ENCODE measurements at regions of chr1 and their contacts with region 1.

Region 1: GRCh38 chr1:67618285-67619018 is 66.5 kb upstream of the GADD45A start:
- DNase-seq: peak; percentile 44 to 90
- H3K4me3 ChIP-seq: peak overlapping the region; percentile 10 to 45
- H3K27ac ChIP-seq: peak overlapping the region; percentile 80 to 82
- H3K4me1 ChIP-seq: peaks cover 2 to 14% of the 10 kb centered on the region in 2 donors
- H3K27me3 ChIP-seq: no peaks in the 10 kb centered on the region
- CTCF ChIP-seq: no peak

Region 2: GRCh38 chr1:66253330-66253921 is 1365.0 kb before region 1 on chr1:
- intact Hi-C with region 1: no loop called
- DNase-seq: no peak
- H3K4me3 ChIP-seq: no peak overlapping the region
- H3K27ac ChIP-seq: no peak overlapping the region
- H3K4me1 ChIP-seq: no peaks in the 10 kb centered on the region
- H3K27me3 ChIP-seq: no peaks in the 10 kb centered on the region
- CTCF ChIP-seq: peak; percentile 72 to 76 (median 74)

Region 3: DNA sequence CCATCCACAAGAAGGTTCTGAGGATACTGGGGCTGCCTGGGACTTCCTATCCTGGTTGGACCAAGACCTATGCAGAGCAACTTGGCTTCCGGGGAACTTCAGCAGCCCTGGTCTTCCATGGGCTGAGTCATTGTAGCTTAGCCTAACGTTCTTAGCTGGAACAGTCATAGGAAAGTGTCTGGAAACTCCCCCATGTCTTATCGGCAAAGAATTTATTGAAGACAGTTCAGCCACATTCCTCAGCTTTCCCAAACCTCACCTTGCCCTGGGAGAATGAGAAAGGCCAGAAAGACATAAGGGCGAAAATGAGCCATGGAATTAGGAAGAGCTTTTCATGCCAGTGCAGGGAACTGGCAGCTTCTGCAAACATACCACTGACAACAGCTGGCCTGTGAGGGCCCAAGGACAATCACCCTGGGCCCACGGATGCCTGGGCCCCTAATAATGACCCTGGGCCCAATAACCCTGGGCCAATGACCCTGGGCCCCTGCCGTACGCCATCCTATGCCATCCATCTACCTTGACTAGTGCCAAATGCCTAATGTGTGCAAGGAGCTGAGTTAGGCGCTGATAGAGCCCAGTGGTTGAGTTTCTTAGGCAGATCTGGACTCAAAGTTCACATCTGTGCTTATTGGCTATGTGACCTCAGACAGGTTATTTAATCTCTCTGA is 47.8 kb before region 1 on chr1:
- intact Hi-C with region 1: loop called (anchors 5 kb)
- DNase-seq: no peak
- H3K4me3 ChIP-seq: no peak overlapping the region
- H3K27ac ChIP-seq: peak overlapping the region; percentile 34 to 70
- H3K4me1 ChIP-seq: peaks cover 7 to 16% of the 10 kb centered on the region in 2 donors
- H3K27me3 ChIP-seq: no peaks in the 10 kb centered on the region
- CTCF ChIP-seq: no peak

Region 4: DNA sequence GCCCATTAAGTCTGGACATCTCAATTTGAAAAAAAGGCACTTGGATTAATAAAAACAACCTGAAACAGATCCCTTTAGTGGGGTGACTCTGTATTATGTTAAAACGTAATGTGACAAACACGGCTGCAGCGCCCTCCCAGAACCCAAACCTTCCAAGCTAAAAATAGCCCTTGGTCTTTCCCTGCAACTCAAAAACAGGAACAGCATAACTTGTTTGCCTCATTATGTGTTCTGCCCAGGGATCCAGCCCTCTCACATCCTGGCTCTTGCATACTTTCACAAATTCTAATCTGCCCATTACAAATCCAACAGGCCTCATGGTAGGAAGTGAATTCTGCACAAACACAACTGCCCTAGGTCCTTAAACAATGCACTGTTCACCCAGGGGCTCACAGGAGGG is 28.1 kb before region 1 on chr1:
- intact Hi-C with region 1: loop called (anchors 2 kb)
- DNase-seq: peak in 1 of 2 donors; percentile 86
- H3K4me3 ChIP-seq: no peak overlapping the region
- H3K27ac ChIP-seq: peak overlapping the region; percentile 79 to 90
- H3K4me1 ChIP-seq: peaks cover 10 to 44% of the 10 kb centered on the region in 2 donors
- H3K27me3 ChIP-seq: no peaks in the 10 kb centered on the region
- CTCF ChIP-seq: no peak

Region 5: GRCh38 chr1:67735806-67736627 is 117.6 kb after region 1 on chr1:
- intact Hi-C with region 1: no loop called
- DNase-seq: peak; percentile 30 to 89
- H3K4me3 ChIP-seq: peak overlapping the region in 1 of 2 donors; percentile 20
- H3K27ac ChIP-seq: peak overlapping the region; percentile 77 to 80
- H3K4me1 ChIP-seq: peaks cover 33 to 74% of the 10 kb centered on the region in 2 donors
- H3K27me3 ChIP-seq: no peaks in the 10 kb centered on the region
- CTCF ChIP-seq: no peak